Naive thymus-derived CD4-positive, alpha-beta T cell (primary cell): ENCODE measurements at regions of chr2 and their contacts with region 1.

Region 1: DNA sequence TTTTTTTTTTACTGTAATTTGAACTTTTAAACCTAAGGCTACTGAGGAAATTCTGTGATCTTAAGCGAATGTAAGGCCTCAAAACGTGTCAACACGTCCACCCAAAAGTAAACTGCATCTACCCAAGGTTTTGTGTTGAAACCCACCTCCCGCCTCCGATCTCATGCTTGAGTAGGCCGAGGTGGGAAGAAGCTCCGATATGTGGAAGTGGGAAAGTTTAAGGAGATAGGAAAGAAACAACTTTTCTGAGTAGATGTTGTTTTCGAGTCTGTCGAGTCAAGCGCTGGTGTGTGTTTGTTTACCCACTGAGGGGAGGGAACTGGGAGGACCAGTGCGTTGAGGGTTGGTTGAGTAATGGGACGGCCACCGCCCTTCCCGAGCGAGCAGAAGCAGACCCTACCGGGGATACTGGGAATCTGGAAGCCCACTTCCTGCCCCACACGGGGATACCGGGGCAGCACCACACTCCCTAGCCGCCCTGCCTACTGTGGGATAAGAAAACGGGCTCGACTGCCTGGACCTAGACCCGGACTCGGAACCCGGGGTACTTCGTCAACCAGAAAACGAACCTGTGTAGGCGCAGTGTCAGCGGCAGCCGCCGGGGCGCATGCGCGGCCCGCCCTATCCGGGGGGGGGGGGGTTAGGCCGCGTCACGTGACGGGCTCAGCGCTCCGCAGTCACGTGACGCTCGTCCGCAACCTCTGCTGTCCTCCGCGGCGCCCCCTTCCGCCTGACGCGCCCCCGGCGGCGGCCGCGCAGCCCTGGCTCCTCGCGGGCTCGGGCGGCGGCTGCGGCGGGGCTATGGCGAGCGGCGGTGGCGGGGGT is at the start of gene RETREG2:
- DNase-seq: peak; percentile 79 to 86 (median 83)
- ATAC-seq: peak; percentile 73
- H3K4me3 ChIP-seq: peak within 1 kb of the TSS; percentile 97
- H3K4me3 Mint-ChIP-seq: peak within 1 kb of the TSS; percentile 90 to 99 (median 96)
- H3K27ac ChIP-seq: peak within 1 kb of the TSS; percentile 96
- H3K27ac Mint-ChIP-seq: peak within 1 kb of the TSS; percentile 97 to 100 (median 99)
- H3K4me1 ChIP-seq: peaks cover 44 to 47% of the 10 kb centered on the region in 2 donors
- H3K4me1 Mint-ChIP-seq: peaks cover 48 to 80% (median 69%) of the 10 kb centered on the region in 7 donors
- H3K27me3 ChIP-seq: no peaks in the 10 kb centered on the region
- H3K27me3 Mint-ChIP-seq: no peaks in the 10 kb centered on the region
- total RNA-seq, gene RETREG2: 70.2 to 124 (median 90.9) TPM

Region 2: DNA sequence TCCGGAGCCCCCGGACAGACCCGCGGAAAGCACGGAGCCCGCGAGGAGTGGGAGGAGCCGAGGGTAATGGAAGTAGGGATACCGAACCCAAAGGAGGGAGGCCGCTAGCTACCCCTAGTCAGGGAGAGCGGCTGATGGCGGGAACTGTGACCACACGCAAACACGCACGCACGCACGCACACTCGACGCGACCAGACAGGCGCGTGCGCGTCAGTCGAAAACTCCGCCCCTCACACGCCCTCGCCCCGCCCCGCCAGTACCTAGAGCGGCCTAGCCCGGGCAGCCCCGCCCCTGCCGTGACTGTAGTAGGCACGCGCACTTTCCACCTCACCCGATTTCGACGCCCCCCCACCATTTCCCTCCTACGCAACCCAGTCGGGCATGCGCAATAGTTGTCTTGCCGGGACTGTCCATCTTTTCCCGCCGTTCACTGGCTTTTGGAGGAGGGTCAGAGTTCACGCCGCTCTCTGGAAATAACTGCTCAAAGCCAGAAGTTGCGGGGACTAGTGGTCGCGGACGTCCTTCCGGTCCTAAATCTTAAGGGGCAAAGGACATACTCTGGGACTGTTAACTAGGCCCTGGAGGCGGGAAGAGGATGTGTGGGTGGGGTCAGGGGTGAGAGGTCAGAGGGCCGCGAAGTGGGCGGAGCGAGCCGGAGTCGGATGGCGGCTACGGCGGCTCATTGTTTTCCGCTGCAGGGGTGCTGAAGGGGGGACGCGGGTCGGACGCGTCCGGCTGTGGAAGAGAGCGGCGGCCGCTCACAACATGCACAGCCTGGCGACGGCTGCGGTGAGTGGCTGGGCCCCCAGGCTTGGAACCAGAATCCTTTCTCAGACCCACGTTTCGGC is 609.4 kb before region 1 on chr2 and contains the starts of genes CNOT9 and USP37:
- CTCF ChIA-PET with region 1: no interaction called
- POLR2A ChIA-PET with region 1: no interaction called
- intact Hi-C with region 1: loop called in 1 of 2 experiments (anchors 1 kb)
- DNase-seq: peak; percentile 99 to 100 (median 100)
- ATAC-seq: peak; percentile 95
- H3K4me3 ChIP-seq: peak within 1 kb of the TSS; percentile 78
- H3K4me3 Mint-ChIP-seq: peak within 1 kb of the TSS; percentile 90 to 100 (median 98)
- H3K27ac ChIP-seq: peak within 1 kb of the TSS; percentile 96
- H3K27ac Mint-ChIP-seq: peak within 1 kb of the TSS; percentile 97 to 100 (median 99)
- H3K4me1 ChIP-seq: peaks cover 22 to 31% of the 10 kb centered on the region in 2 donors
- H3K4me1 Mint-ChIP-seq: peaks cover 45 to 73% (median 64%) of the 10 kb centered on the region in 7 donors
- H3K27me3 ChIP-seq: no peaks in the 10 kb centered on the region
- H3K27me3 Mint-ChIP-seq: no peaks in the 10 kb centered on the region
- total RNA-seq, gene CNOT9: 44.7 to 99.6 (median 53.8) TPM
- total RNA-seq, gene USP37: 16.6 to 36.3 (median 28.1) TPM

Region 3: GRCh38 chr2:218798767-218799504 is 378.8 kb before region 1 on chr2:
- CTCF ChIA-PET with region 1: no interaction called
- POLR2A ChIA-PET with region 1: no interaction called
- intact Hi-C with region 1: no loop called
- DNase-seq: no peak
- ATAC-seq: no peak
- H3K4me3 ChIP-seq: no peak overlapping the region
- H3K4me3 Mint-ChIP-seq: no peak overlapping the region
- H3K27ac ChIP-seq: no peak overlapping the region
- H3K27ac Mint-ChIP-seq: no peak overlapping the region
- H3K4me1 ChIP-seq: peaks cover 0 to 13% of the 10 kb centered on the region in 2 donors
- H3K4me1 Mint-ChIP-seq: peaks cover 0 to 12% (median 0%) of the 10 kb centered on the region in 7 donors
- H3K27me3 ChIP-seq: no peaks in the 10 kb centered on the region
- H3K27me3 Mint-ChIP-seq: peaks cover 18 to 55% (median 22%) of the 10 kb centered on the region in 5 donors

Region 4: GRCh38 chr2:218898109-218898878 is 279.5 kb before region 1 on chr2:
- CTCF ChIA-PET with region 1: no interaction called
- POLR2A ChIA-PET with region 1: no interaction called
- intact Hi-C with region 1: loop called in 1 of 2 experiments (anchors 1 kb)
- DNase-seq: peak; percentile 50 to 88 (median 72)
- ATAC-seq: peak; percentile 42
- H3K4me3 ChIP-seq: peak overlapping the region; percentile 65
- H3K4me3 Mint-ChIP-seq: peak overlapping the region; percentile 53 to 87 (median 82)
- H3K27ac ChIP-seq: no peak overlapping the region
- H3K27ac Mint-ChIP-seq: peak overlapping the region in 7 of 9 donors; percentile 33 to 92 (median 71)
- H3K4me1 ChIP-seq: peaks cover 40 to 49% of the 10 kb centered on the region in 2 donors
- H3K4me1 Mint-ChIP-seq: peaks cover 38 to 48% (median 42%) of the 10 kb centered on the region in 7 donors
- H3K27me3 ChIP-seq: peaks cover 0 to 3% of the 10 kb centered on the region in 2 donors
- H3K27me3 Mint-ChIP-seq: peaks cover 20 to 75% (median 40%) of the 10 kb centered on the region in 5 donors

Region 5: GRCh38 chr2:219218732-219219701 is 41.3 kb after region 1 on chr2 and contains the start of gene ABCB6:
- CTCF ChIA-PET with region 1: interaction called, 5 read pairs
- POLR2A ChIA-PET with region 1: interaction called, 343 read pairs
- intact Hi-C with region 1: loop called in 1 of 2 experiments (anchors 1 kb)
- DNase-seq: peak; percentile 72 to 90 (median 85)
- ATAC-seq: peak; percentile 92
- H3K4me3 ChIP-seq: peak within 1 kb of the TSS; percentile 60
- H3K4me3 Mint-ChIP-seq: peak within 1 kb of the TSS; percentile 78 to 89 (median 82)
- H3K27ac ChIP-seq: peak within 1 kb of the TSS; percentile 65
- H3K27ac Mint-ChIP-seq: peak within 1 kb of the TSS; percentile 61 to 86 (median 79)
- H3K4me1 ChIP-seq: peaks cover 13 to 14% of the 10 kb centered on the region in 2 donors
- H3K4me1 Mint-ChIP-seq: peaks cover 0 to 29% (median 24%) of the 10 kb centered on the region in 7 donors
- H3K27me3 ChIP-seq: no peaks in the 10 kb centered on the region
- H3K27me3 Mint-ChIP-seq: no peaks in the 10 kb centered on the region
- total RNA-seq, gene ABCB6: 4.1 to 30.2 (median 8.3) TPM

Region 6: GRCh38 chr2:219253753-219254590 is 76.2 kb after region 1 on chr2 and contains the start of gene TUBA4A:
- CTCF ChIA-PET with region 1: interaction called, 5 read pairs
- POLR2A ChIA-PET with region 1: interaction called, 162 read pairs
- intact Hi-C with region 1: loop called (anchors 1 kb)
- DNase-seq: peak; percentile 84 to 94 (median 91)
- ATAC-seq: peak; percentile 92
- H3K4me3 ChIP-seq: peak within 1 kb of the TSS; percentile 79
- H3K4me3 Mint-ChIP-seq: peak within 1 kb of the TSS; percentile 82 to 100 (median 92)
- H3K27ac ChIP-seq: peak within 1 kb of the TSS; percentile 95
- H3K27ac Mint-ChIP-seq: peak within 1 kb of the TSS; percentile 88 to 99 (median 96)
- H3K4me1 ChIP-seq: peaks cover 31 to 38% of the 10 kb centered on the region in 2 donors
- H3K4me1 Mint-ChIP-seq: peaks cover 28 to 54% (median 47%) of the 10 kb centered on the region in 7 donors
- H3K27me3 ChIP-seq: no peaks in the 10 kb centered on the region
- H3K27me3 Mint-ChIP-seq: peaks cover 0 to 3% (median 0%) of the 10 kb centered on the region in 5 donors
- total RNA-seq, gene TUBA4A: 82.9 to 260 (median 183) TPM